Naive thymus-derived CD4-positive, alpha-beta T cell (primary cell): ENCODE measurements at regions of chr1 and their contacts with region 1.

Region 1: GRCh38 chr1:172380441-172381244 is 39.8 kb upstream of the C1orf105 start:
- DNase-seq: peak in 7 of 9 donors; percentile 49 to 82 (median 70)
- ATAC-seq: peak; percentile 96
- H3K4me3 ChIP-seq: peak overlapping the region; percentile 32
- H3K4me3 Mint-ChIP-seq: peak overlapping the region; percentile 53 to 82 (median 76)
- H3K27ac ChIP-seq: peak overlapping the region; percentile 76
- H3K27ac Mint-ChIP-seq: peak overlapping the region; percentile 86 to 94 (median 93)
- H3K4me1 ChIP-seq: peaks cover 10 to 18% of the 10 kb centered on the region in 2 donors
- H3K4me1 Mint-ChIP-seq: peaks cover 12 to 57% (median 49%) of the 10 kb centered on the region in 7 donors
- H3K27me3 ChIP-seq: no peaks in the 10 kb centered on the region
- H3K27me3 Mint-ChIP-seq: peaks cover 0 to 3% (median 0%) of the 10 kb centered on the region in 5 donors

Region 2: GRCh38 chr1:172089768-172090510 is 290.7 kb before region 1 on chr1:
- CTCF ChIA-PET with region 1: interaction called, 3 read pairs
- POLR2A ChIA-PET with region 1: no interaction called
- intact Hi-C with region 1: loop called in 1 of 2 experiments (anchors 1 kb)
- DNase-seq: peak; percentile 25 to 61 (median 46)
- ATAC-seq: peak; percentile 86
- H3K4me3 ChIP-seq: no peak overlapping the region
- H3K4me3 Mint-ChIP-seq: peak overlapping the region in 3 of 10 donors; percentile 9 to 35 (median 24)
- H3K27ac ChIP-seq: no peak overlapping the region
- H3K27ac Mint-ChIP-seq: peak overlapping the region in 4 of 9 donors; percentile 1 to 72 (median 50)
- H3K4me1 ChIP-seq: no peaks in the 10 kb centered on the region
- H3K4me1 Mint-ChIP-seq: peaks cover 0 to 7% (median 6%) of the 10 kb centered on the region in 7 donors
- H3K27me3 ChIP-seq: no peaks in the 10 kb centered on the region
- H3K27me3 Mint-ChIP-seq: peaks cover 0 to 7% (median 0%) of the 10 kb centered on the region in 5 donors

Region 3: GRCh38 chr1:172269644-172270043 is 111.0 kb before region 1 on chr1:
- CTCF ChIA-PET with region 1: no interaction called
- POLR2A ChIA-PET with region 1: no interaction called
- intact Hi-C with region 1: loop called in 1 of 2 experiments (anchors 5 kb)
- DNase-seq: no peak
- ATAC-seq: no peak
- H3K4me3 ChIP-seq: no peak overlapping the region
- H3K4me3 Mint-ChIP-seq: peak overlapping the region in 1 of 10 donors; percentile 18
- H3K27ac ChIP-seq: no peak overlapping the region
- H3K27ac Mint-ChIP-seq: peak overlapping the region in 2 of 9 donors; percentile 31 to 71
- H3K4me1 ChIP-seq: no peaks in the 10 kb centered on the region
- H3K4me1 Mint-ChIP-seq: peaks cover 0 to 43% (median 0%) of the 10 kb centered on the region in 7 donors
- H3K27me3 ChIP-seq: no peaks in the 10 kb centered on the region
- H3K27me3 Mint-ChIP-seq: no peaks in the 10 kb centered on the region

Region 4: GRCh38 chr1:172326136-172326535 is 54.5 kb before region 1 on chr1:
- CTCF ChIA-PET with region 1: no interaction called
- POLR2A ChIA-PET with region 1: no interaction called
- intact Hi-C with region 1: loop called in 1 of 2 experiments (anchors 2 kb)
- DNase-seq: no peak
- ATAC-seq: no peak
- H3K4me3 ChIP-seq: no peak overlapping the region
- H3K4me3 Mint-ChIP-seq: no peak overlapping the region
- H3K27ac ChIP-seq: no peak overlapping the region
- H3K27ac Mint-ChIP-seq: no peak overlapping the region
- H3K4me1 ChIP-seq: no peaks in the 10 kb centered on the region
- H3K4me1 Mint-ChIP-seq: peaks cover 0 to 2% (median 0%) of the 10 kb centered on the region in 7 donors
- H3K27me3 ChIP-seq: no peaks in the 10 kb centered on the region
- H3K27me3 Mint-ChIP-seq: no peaks in the 10 kb centered on the region

Region 5: DNA sequence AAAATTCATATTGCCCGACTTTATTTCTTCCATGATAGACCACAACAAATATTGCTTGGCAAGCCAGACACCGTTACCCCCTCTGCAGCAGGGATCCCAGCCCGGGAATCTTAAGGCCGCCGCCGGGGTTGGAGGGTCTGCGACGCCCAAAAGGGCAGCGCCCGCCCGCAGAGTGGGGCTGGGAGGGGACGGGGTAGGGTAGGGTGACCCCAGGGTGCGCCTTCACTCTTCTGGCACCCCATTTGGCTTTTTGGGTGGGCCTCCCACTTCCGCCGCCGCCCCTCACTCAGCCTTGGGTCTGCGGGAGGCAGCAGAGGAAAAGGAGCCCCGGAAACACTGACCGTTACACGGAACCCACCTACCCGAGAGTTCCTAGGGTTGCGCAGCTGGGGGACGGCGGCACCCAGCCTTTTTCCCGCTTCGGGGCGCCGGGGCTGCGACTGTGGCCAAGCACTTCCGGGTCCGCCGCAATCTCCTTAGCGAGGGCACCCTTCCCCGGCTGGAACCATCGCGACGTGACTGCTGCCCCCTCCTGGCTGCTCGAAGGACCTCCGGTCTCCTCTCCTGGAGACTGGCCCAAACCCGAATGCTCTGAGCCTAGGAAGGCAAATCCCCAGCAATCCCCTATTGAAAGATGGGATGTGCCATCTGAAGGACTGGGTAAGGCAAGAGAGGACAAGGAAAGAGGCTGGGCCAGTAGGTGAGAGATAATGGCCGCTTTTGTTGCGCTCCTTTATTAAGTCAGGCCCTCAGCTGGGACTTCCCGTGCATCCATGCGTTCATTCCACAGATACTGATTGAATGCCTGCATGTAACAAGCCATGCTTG is 63.2 kb after region 1 on chr1 and contains the start of gene PIGC:
- CTCF ChIA-PET with region 1: no interaction called
- POLR2A ChIA-PET with region 1: no interaction called
- intact Hi-C with region 1: loop called in 1 of 2 experiments (anchors 1 kb)
- DNase-seq: peak; percentile 78 to 89 (median 87)
- ATAC-seq: peak; percentile 100
- H3K4me3 ChIP-seq: peak within 1 kb of the TSS; percentile 72
- H3K4me3 Mint-ChIP-seq: peak within 1 kb of the TSS; percentile 87 to 98 (median 94)
- H3K27ac ChIP-seq: peak within 1 kb of the TSS; percentile 83
- H3K27ac Mint-ChIP-seq: peak within 1 kb of the TSS; percentile 91 to 97 (median 93)
- H3K4me1 ChIP-seq: peaks cover 15 to 25% of the 10 kb centered on the region in 2 donors
- H3K4me1 Mint-ChIP-seq: peaks cover 27 to 53% (median 47%) of the 10 kb centered on the region in 7 donors
- H3K27me3 ChIP-seq: no peaks in the 10 kb centered on the region
- H3K27me3 Mint-ChIP-seq: no peaks in the 10 kb centered on the region
- total RNA-seq, gene PIGC: 21.1 to 57.4 (median 25.1) TPM

Region 6: GRCh38 chr1:172466795-172467407 is 86.3 kb after region 1 on chr1:
- CTCF ChIA-PET with region 1: no interaction called
- POLR2A ChIA-PET with region 1: no interaction called
- intact Hi-C with region 1: no loop called
- DNase-seq: no peak
- ATAC-seq: no peak
- H3K4me3 ChIP-seq: no peak overlapping the region
- H3K4me3 Mint-ChIP-seq: no peak overlapping the region
- H3K27ac ChIP-seq: no peak overlapping the region
- H3K27ac Mint-ChIP-seq: no peak overlapping the region
- H3K4me1 ChIP-seq: no peaks in the 10 kb centered on the region
- H3K4me1 Mint-ChIP-seq: no peaks in the 10 kb centered on the region
- H3K27me3 ChIP-seq: no peaks in the 10 kb centered on the region
- H3K27me3 Mint-ChIP-seq: peaks cover 0 to 5% (median 5%) of the 10 kb centered on the region in 5 donors

Region 7: GRCh38 chr1:172487550-172487949 is 106.9 kb after region 1 on chr1:
- CTCF ChIA-PET with region 1: no interaction called
- POLR2A ChIA-PET with region 1: no interaction called
- intact Hi-C with region 1: no loop called
- DNase-seq: peak in 1 of 9 donors; percentile 12
- ATAC-seq: no peak
- H3K4me3 ChIP-seq: no peak overlapping the region
- H3K4me3 Mint-ChIP-seq: peak overlapping the region in 5 of 10 donors; percentile 8 to 59 (median 41)
- H3K27ac ChIP-seq: no peak overlapping the region
- H3K27ac Mint-ChIP-seq: no peak overlapping the region
- H3K4me1 ChIP-seq: peaks cover 0 to 12% of the 10 kb centered on the region in 2 donors
- H3K4me1 Mint-ChIP-seq: peaks cover 9 to 26% (median 19%) of the 10 kb centered on the region in 7 donors
- H3K27me3 ChIP-seq: no peaks in the 10 kb centered on the region
- H3K27me3 Mint-ChIP-seq: peaks cover 4 to 35% (median 9%) of the 10 kb centered on the region in 5 donors